ENCODE measurements at regions of chr2 and their contacts with region 1.

Region 1: GRCh38 chr2:72678024-72678423 is 147.8 kb downstream of the EXOC6B start:
- DNase-seq: no peak
- ATAC-seq: no peak
- H3K4me3 ChIP-seq: no peak overlapping the region
- H3K4me3 Mint-ChIP-seq: no peak overlapping the region
- H3K27ac ChIP-seq: no peak overlapping the region
- H3K27ac Mint-ChIP-seq: no peak overlapping the region
- H3K4me1 ChIP-seq: no peaks in the 10 kb centered on the region
- H3K4me1 Mint-ChIP-seq: peaks cover 6 to 17% of the 10 kb centered on the region in 2 donors
- H3K27me3 ChIP-seq: no peaks in the 10 kb centered on the region
- H3K27me3 Mint-ChIP-seq: no peaks in the 10 kb centered on the region
- CTCF ChIP-seq: no peak

Region 2: DNA sequence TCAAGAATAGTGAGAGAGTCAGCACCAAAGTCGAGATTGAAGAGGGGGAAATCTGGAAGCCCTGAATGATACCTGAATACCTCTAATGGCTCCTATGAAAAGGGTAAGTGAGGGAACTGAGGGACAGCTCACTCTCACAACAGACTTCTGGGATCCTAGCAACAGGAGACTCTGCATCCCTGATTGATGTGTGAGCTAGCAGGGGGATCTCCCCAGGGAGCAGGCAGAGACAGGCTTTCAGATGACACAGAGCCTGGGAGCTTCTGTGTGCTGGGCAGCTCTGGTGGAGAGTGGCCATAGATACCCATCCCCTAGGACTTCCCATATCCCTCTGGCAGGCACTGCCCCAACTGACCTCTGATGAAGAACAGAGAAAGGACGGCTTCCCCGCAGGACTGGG is 58.4 kb before region 1 on chr2:
- intact Hi-C with region 1: no loop called
- DNase-seq: no peak
- ATAC-seq: no peak
- H3K4me3 ChIP-seq: no peak overlapping the region
- H3K4me3 Mint-ChIP-seq: no peak overlapping the region
- H3K27ac ChIP-seq: no peak overlapping the region
- H3K27ac Mint-ChIP-seq: no peak overlapping the region
- H3K4me1 ChIP-seq: no peaks in the 10 kb centered on the region
- H3K4me1 Mint-ChIP-seq: peaks cover 9 to 18% of the 10 kb centered on the region in 2 donors
- H3K27me3 ChIP-seq: no peaks in the 10 kb centered on the region
- H3K27me3 Mint-ChIP-seq: no peaks in the 10 kb centered on the region
- CTCF ChIP-seq: no peak

Region 3: GRCh38 chr2:72696559-72696958 is 18.5 kb after region 1 on chr2:
- intact Hi-C with region 1: loop called (anchors 1 kb)
- DNase-seq: no peak
- ATAC-seq: no peak
- H3K4me3 ChIP-seq: no peak overlapping the region
- H3K4me3 Mint-ChIP-seq: no peak overlapping the region
- H3K27ac ChIP-seq: no peak overlapping the region
- H3K27ac Mint-ChIP-seq: no peak overlapping the region
- H3K4me1 ChIP-seq: no peaks in the 10 kb centered on the region
- H3K4me1 Mint-ChIP-seq: no peaks in the 10 kb centered on the region
- H3K27me3 ChIP-seq: no peaks in the 10 kb centered on the region
- H3K27me3 Mint-ChIP-seq: no peaks in the 10 kb centered on the region
- CTCF ChIP-seq: no peak

Region 4: DNA sequence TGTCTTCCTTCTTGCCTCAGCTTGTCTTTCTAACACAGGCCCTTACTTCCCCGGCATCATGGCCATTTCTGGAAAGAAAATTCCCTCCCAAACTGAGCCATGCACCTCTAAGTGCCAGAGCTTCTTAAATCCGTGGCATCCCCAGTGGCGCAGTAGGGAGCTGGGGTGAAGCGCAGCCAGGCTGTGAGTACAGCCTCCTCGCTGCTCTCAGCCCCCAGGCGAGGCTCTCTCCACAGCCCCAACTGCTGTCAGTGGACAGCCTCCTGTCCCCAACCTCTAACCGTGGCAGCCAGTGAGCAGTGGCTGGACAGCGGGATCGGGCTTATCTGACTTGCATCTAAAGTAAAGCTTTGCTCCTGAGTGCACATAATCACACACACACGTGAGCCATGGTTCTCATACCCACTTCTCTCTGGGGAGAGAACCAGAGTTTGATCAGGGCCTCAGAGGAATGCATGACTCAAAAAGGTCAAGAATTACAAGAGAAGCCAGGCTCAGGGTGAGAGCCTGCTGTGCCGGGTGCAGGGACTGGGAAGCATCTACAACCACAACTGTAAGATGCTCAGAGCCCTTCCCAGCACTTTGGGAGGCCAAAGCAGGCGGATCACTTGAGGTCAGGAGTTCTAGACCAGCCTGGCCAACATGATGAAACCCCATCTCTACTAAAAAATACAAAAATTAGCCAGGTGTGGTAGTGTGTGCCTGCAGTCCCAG is 342.8 kb after region 1 on chr2:
- intact Hi-C with region 1: no loop called
- DNase-seq: no peak
- ATAC-seq: no peak
- H3K4me3 ChIP-seq: no peak overlapping the region
- H3K4me3 Mint-ChIP-seq: no peak overlapping the region
- H3K27ac ChIP-seq: no peak overlapping the region
- H3K27ac Mint-ChIP-seq: no peak overlapping the region
- H3K4me1 ChIP-seq: no peaks in the 10 kb centered on the region
- H3K4me1 Mint-ChIP-seq: no peaks in the 10 kb centered on the region
- H3K27me3 ChIP-seq: no peaks in the 10 kb centered on the region
- H3K27me3 Mint-ChIP-seq: no peaks in the 10 kb centered on the region
- CTCF ChIP-seq: no peak